ENCODE measurements at regions of chr5 and their contacts with region 1.

Region 1: GRCh38 chr5:84028093-84028492 is 307.4 kb upstream of the HAPLN1 start:
- DNase-seq: peak; percentile 88
- H3K4me3 ChIP-seq: peak overlapping the region in 1 of 3 experiments; percentile 5
- H3K27ac ChIP-seq: peak overlapping the region; percentile 87
- H3K4me1 ChIP-seq: peaks cover 28% of the 10 kb centered on the region
- H3K27me3 ChIP-seq: no peaks in the 10 kb centered on the region
- CTCF ChIP-seq: no peak
- POLR2A ChIP-seq: no peak

Region 2: DNA sequence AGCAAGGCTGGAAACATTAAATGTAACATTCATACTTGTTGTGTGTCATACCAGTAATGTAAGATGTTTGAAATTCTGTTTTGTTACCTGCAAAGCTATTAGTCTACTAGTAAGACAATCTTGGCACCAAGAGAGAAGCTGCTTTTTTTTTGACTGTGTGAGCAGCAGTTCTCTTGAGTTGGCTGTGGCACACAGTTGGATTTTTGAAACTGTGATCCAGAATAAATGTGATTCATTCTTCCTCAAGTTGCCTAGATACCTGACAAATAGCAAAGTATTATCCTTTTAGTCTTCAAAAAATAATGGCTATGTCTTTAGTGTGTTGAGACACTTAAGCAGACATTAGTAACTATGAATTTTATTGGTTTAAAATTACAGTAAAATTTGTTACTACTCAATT is 250.2 kb before region 1 on chr5:
- CTCF ChIA-PET with region 1: no interaction called
- POLR2A ChIA-PET with region 1: no interaction called
- dilution Hi-C with region 1: no loop called
- intact Hi-C with region 1: loop called (anchors 5 kb)
- DNase-seq: peak; percentile 20
- H3K4me3 ChIP-seq: no peak overlapping the region
- H3K27ac ChIP-seq: peak overlapping the region; percentile 16
- H3K4me1 ChIP-seq: peaks cover 27% of the 10 kb centered on the region
- H3K27me3 ChIP-seq: no peaks in the 10 kb centered on the region
- CTCF ChIP-seq: no peak
- POLR2A ChIP-seq: no peak

Region 3: DNA sequence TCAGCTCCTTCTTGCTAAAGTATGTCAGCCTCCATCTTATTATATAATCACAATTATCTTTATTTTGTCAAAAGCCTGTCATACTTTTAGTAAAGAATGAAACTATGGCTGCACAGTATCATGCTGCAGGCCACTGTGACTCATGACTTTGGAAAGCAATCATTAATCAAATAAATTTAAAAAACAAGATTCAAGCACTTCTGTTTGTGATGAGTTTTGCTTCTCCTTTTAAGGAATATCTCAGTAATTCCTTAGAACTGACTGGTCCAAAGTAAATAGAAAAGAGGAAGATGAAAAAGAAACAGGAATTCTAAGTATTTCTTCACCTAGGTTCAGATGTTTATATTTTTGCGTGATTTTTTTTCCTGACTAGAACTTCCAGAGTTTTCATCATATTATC is 273.4 kb after region 1 on chr5:
- CTCF ChIA-PET with region 1: no interaction called
- POLR2A ChIA-PET with region 1: no interaction called
- dilution Hi-C with region 1: no loop called
- intact Hi-C with region 1: loop called (anchors 5 kb)
- DNase-seq: peak; percentile 69
- H3K4me3 ChIP-seq: no peak overlapping the region
- H3K27ac ChIP-seq: peak overlapping the region; percentile 48
- H3K4me1 ChIP-seq: peaks cover 35% of the 10 kb centered on the region
- H3K27me3 ChIP-seq: no peaks in the 10 kb centered on the region
- CTCF ChIP-seq: no peak
- POLR2A ChIP-seq: no peak